OCI-LY7 (cell line): ENCODE measurements at regions of chr19 and their contacts with region 1.

Region 1: DNA sequence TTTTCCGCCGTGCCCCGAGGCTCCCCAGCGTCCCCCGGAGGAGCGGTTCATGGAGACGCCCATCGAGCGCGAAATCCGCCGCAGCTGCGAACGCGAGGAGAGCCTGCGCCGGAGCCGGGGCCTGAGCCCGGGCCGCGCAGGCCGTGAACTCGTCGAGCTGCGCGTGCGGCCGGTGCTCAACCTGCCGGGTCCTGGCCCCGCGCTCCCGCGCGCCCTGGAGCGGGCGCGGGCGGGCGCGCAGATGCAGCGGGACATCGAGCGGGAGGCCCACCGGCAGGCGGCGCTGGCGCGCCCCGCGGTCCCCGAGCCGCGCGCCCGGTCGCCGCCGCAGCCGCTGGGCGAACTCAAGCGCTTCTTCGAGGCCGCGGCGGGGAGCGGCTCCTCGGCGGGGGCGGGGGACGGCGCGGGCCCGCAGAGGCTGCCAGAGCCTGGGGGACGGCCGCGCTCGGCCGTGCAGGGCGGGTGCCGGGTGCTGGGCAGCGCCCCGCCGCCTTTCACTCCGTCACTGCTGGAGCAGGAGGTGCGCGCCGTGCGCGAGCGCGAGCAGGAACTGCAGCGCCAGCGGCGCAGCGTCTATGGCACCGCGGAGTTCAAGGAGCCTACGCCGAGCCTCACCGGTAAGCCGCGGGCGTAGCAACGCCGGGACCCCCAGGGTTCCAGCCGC is 807 bp downstream of the MISP3 start:
- DNase-seq: peak; percentile 88
- H3K4me3 ChIP-seq: peak overlapping the region; percentile 76
- H3K27ac ChIP-seq: peak overlapping the region; percentile 62
- H3K4me1 ChIP-seq: peaks cover 29% of the 10 kb centered on the region
- CTCF ChIP-seq: no peak; the same call in 1 of the 2 replicates

Region 2: DNA sequence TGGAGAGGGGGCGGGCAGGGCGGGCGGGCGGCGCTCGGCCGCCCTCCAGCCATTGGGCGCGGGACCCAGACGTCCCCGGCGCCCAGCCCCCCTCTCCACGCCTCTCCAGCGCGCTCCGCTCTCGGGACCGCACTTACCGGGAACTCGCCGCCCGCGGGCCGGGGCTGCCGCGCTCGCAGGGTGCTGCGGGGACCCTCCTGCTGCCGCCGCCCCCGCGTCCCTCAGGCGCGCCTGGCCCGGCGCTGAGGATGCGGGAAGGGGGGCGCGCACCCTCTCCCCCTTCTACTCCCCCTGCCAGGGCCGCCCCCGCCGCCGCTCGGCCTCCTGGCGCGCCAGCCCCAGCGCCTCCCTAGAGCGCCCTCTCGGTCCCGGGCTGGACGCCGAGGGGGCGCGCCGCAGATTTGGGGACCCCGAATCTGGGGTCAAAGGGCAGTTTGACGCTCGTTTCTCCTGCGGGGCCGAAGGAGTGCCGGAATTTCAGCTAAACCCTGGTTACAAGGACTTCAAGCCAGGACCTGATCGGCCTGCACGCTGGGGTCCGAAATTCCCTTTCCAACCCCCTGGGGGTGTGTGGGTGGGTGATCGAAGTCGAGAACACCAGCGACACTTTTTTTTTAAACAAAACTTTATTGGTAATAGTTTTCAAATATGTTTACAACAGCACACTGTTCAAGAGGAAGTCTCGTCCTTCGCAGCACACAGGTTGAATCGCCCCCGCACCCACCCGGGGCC is 17.9 kb after region 1 on chr19:
- CTCF ChIA-PET with region 1: no interaction called
- POLR2A ChIA-PET with region 1: no interaction called
- intact Hi-C with region 1: loop called (anchors 1 kb)
- DNase-seq: peak; percentile 83
- H3K4me3 ChIP-seq: peak overlapping the region; percentile 80
- H3K27ac ChIP-seq: peak overlapping the region; percentile 89
- H3K4me1 ChIP-seq: peaks cover 21% of the 10 kb centered on the region
- CTCF ChIP-seq: peak; percentile 79

Region 3: DNA sequence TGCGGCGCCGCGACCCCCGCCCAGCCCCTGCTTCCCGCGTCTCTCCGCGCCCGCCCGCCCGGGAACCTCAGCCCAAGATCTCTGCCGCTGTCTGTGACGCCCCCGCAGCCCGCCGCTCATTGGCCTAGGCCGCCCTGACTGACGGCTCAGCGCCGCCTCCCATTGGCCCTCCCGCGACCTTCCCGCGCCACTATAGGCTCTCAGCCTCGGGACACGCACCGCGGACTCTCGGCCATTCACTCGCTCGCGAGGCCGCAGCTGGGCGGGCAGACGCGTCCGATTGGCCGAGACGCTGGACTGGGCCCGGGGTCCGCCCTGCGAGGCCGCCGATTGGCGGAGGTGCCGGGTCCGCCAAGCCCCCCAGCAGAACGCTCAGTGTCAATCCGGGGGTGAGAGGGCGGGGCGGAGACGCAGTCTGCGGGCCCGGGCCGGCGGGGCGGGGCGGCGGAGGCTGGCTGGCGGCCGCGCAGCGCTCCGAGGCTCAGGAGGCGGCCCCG is 44.3 kb after region 1 on chr19 and contains the start of gene PRKACA:
- CTCF ChIA-PET with region 1: no interaction called
- POLR2A ChIA-PET with region 1: no interaction called
- intact Hi-C with region 1: loop called (anchors 1 kb)
- DNase-seq: peak; percentile 99
- H3K4me3 ChIP-seq: peak within 1 kb of the TSS; percentile 94
- H3K27ac ChIP-seq: no peak within 1 kb of the TSS
- H3K4me1 ChIP-seq: peaks cover 31% of the 10 kb centered on the region
- CTCF ChIP-seq: no peak
- total RNA-seq, gene PRKACA: 18.0 and 21.1 TPM in 2 replicates